ENCODE measurements at regions of chr16 and their contacts with region 1.

Region 1: GRCh38 chr16:67672739-67673662 is 6.4 kb downstream of the C16orf86 start:
- DNase-seq: peak; percentile 39
- H3K4me3 ChIP-seq: no peak overlapping the region
- H3K27ac ChIP-seq: no peak overlapping the region
- H3K4me1 ChIP-seq: peaks cover 9% of the 10 kb centered on the region
- H3K27me3 ChIP-seq: no peaks in the 10 kb centered on the region
- CTCF ChIP-seq: peak; percentile 79 to 83

Region 2: DNA sequence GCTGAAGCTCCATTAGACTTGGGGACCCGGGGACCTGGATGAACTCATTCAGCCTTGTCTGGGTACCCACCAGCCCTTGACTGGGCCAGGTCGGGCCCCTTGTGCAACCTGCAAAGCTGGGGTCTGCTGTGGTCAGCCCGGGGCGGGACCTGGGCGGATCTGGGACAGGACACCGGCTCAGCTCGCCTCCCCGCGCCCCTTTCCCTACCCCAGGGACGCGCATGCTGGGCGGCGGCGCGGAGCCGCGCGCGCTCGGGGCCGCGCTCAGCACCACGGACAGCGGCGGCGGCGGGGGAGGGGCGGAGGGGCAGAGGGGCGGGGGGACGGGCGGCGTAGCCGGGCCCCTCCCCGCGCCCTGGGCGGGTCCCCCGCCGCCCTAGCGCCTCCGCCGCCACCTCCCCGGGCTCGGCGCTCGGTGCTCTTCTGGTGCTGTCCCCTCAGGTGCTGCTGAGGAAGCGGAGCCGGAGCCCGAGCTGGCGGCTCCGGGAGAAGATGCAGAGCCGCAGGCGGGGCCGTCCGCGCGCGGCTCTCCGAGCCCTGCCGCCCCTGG is 20.3 kb before region 1 on chr16:
- CTCF ChIA-PET with region 1: no interaction called
- dilution Hi-C with region 1: no loop called
- in situ Hi-C with region 1: no loop called
- intact Hi-C with region 1: no loop called
- DNase-seq: peak; percentile 39
- H3K4me3 ChIP-seq: peak overlapping the region in 2 of 3 experiments; percentile 36 to 43
- H3K27ac ChIP-seq: no peak overlapping the region
- H3K4me1 ChIP-seq: peaks cover 9% of the 10 kb centered on the region
- H3K27me3 ChIP-seq: peaks cover 34% of the 10 kb centered on the region
- CTCF ChIP-seq: no peak

Region 3: GRCh38 chr16:67806428-67807147 is 133.6 kb after region 1 on chr16 and contains the starts of genes RANBP10 and TSNAXIP1:
- CTCF ChIA-PET with region 1: interaction called, 6 read pairs
- dilution Hi-C with region 1: no loop called
- in situ Hi-C with region 1: no loop called
- intact Hi-C with region 1: loop called (anchors 1 kb)
- DNase-seq: peak; percentile 99
- H3K4me3 ChIP-seq: peak within 1 kb of the TSS; percentile 80 to 93 (median 86)
- H3K27ac ChIP-seq: peak within 1 kb of the TSS; percentile 78
- H3K4me1 ChIP-seq: peaks cover 15% of the 10 kb centered on the region
- H3K27me3 ChIP-seq: no peaks in the 10 kb centered on the region
- CTCF ChIP-seq: no peak
- total RNA-seq, gene RANBP10: 5.5 to 15.3 TPM
- total RNA-seq, gene TSNAXIP1: 0.33 to 0.99 TPM

Region 4: GRCh38 chr16:67865316-67865715 is 192.3 kb after region 1 on chr16:
- CTCF ChIA-PET with region 1: no interaction called
- dilution Hi-C with region 1: no loop called
- in situ Hi-C with region 1: no loop called
- intact Hi-C with region 1: loop called (anchors 1 kb)
- DNase-seq: peak; percentile 34
- H3K4me3 ChIP-seq: no peak overlapping the region
- H3K27ac ChIP-seq: no peak overlapping the region
- H3K4me1 ChIP-seq: peaks cover 22% of the 10 kb centered on the region
- H3K27me3 ChIP-seq: no peaks in the 10 kb centered on the region
- CTCF ChIP-seq: peak; percentile 34 to 65

Region 5: GRCh38 chr16:67928561-67929364 is 255.8 kb after region 1 on chr16:
- CTCF ChIA-PET with region 1: no interaction called
- dilution Hi-C with region 1: no loop called
- in situ Hi-C with region 1: loop called (anchors 10 to 25 kb)
- intact Hi-C with region 1: loop called (anchors 1 kb)
- DNase-seq: peak; percentile 49
- H3K4me3 ChIP-seq: no peak overlapping the region
- H3K27ac ChIP-seq: no peak overlapping the region
- H3K4me1 ChIP-seq: no peaks in the 10 kb centered on the region
- H3K27me3 ChIP-seq: no peaks in the 10 kb centered on the region
- CTCF ChIP-seq: peak; percentile 94 to 95